Psoas muscle (tissue), 8 donors: ENCODE measurements at regions of chr16 and their contacts with region 1.

Region 1: DNA sequence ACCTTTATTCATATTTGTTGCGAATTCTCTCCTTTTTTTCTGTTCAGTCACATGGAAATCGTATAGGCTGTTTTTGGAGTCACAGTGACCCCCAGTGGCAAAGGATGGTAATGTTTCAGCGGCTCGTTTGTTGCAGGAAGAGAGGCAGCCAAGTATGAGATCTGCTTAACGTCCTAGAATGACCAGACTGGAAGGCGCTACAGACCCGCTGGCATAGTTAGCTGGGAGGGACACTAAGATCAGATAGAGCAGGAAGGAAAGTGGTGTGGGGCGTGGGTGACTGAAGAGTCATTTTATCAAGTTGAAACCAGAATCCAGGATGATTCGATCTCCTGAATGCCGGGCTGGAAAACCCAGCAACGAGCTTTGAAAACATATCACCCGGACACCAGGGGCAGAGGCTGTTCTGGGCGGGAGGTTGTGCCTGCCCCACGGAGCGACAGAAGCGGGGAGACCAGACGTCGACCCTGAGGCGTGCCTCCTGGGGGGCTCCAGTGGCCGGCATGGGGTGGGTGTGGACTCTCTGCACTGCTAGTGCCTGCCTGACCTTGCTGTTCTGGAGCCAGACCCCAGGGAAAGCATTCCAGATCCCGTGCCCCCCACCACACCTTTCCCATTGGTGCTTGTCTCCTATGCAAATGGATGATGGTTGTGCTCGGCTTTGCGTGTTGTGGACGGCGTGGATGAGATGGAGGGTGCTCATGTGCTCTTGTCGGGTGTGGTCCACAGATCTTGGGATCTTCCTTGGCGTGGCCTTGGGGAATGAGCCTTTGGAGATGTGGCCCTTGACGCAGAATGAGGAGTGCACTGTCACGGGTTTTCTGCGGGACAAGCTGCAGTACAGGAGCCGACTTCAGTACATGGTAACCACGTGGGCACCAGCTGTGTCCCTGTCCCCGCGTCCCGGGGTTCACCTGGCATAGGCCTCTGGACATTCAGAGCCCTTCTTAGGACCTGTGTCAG is 7.7 kb downstream of the IL34 start:
- DNase-seq: peak; percentile 76 to 82
- ATAC-seq: peak; percentile 75 to 88 (median 79)
- H3K4me3 ChIP-seq: peak overlapping the region; percentile 37
- H3K27ac ChIP-seq: no peak overlapping the region
- H3K4me1 ChIP-seq: peaks cover 6% of the 10 kb centered on the region
- H3K27me3 ChIP-seq: no peaks in the 10 kb centered on the region
- CTCF ChIP-seq: peak; percentile 92

Region 2: DNA sequence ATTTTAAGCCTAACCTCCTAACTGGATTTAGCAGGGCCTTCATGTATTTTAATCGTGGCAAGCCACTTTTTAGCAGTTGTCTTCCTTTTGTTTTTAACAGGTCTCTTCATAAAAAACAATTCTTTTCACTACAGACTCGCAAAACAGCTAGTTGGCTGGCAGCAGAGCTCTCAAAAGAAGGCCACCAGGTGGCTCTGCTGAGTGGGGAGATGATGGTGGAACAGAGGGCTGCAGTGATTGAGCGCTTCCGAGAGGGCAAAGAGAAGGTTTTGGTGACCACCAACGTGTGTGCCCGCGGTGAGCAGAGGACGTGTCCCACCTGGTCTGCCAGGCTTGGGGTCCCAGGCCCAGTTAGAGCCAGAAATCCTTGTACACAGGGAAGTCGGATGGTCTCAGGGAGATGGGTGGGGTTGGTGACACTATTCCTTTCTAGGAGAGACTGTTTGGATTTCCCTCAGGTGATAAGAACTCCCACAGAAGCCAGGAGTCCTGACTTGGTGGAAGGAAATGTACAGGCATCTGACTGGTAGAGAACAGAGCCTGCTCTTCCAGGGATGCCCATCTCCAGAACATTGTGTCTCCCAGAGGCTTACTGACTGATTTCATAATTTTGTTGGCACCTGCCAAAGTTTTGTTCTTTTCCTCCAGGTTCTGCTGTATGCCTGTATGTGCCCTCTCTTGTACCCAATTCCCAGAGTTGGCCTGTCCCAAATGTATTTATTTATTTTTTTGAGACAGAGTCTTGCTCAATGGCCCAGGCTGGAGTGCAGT is 322.3 kb before region 1 on chr16:
- intact Hi-C with region 1: loop called in 1 of 2 experiments (anchors 5 kb)
- DNase-seq: peak in 1 of 2 donors; percentile 60
- ATAC-seq: peak; percentile 78 to 91 (median 87)
- H3K4me3 ChIP-seq: no peak overlapping the region
- H3K27ac ChIP-seq: peak overlapping the region; percentile 16
- H3K4me1 ChIP-seq: no peaks in the 10 kb centered on the region
- H3K27me3 ChIP-seq: no peaks in the 10 kb centered on the region
- CTCF ChIP-seq: peak; percentile 57

Region 3: GRCh38 chr16:70375636-70376611 is 278.2 kb before region 1 on chr16:
- intact Hi-C with region 1: loop called (anchors 10 kb)
- DNase-seq: no peak
- ATAC-seq: peak in 3 of 4 donors; percentile 20 to 37 (median 29)
- H3K4me3 ChIP-seq: no peak overlapping the region
- H3K27ac ChIP-seq: peak overlapping the region; percentile 62
- H3K4me1 ChIP-seq: peaks cover 21% of the 10 kb centered on the region
- H3K27me3 ChIP-seq: no peaks in the 10 kb centered on the region
- CTCF ChIP-seq: no peak

Region 4: GRCh38 chr16:70529051-70529777 is 124.9 kb before region 1 on chr16:
- intact Hi-C with region 1: loop called (anchors 5 kb)
- DNase-seq: no peak
- ATAC-seq: peak in 2 of 4 donors; percentile 57 to 63
- H3K4me3 ChIP-seq: peak overlapping the region; percentile 29
- H3K27ac ChIP-seq: peak overlapping the region; percentile 36
- H3K4me1 ChIP-seq: peaks cover 47% of the 10 kb centered on the region
- H3K27me3 ChIP-seq: no peaks in the 10 kb centered on the region
- CTCF ChIP-seq: peak; percentile 47

Region 5: DNA sequence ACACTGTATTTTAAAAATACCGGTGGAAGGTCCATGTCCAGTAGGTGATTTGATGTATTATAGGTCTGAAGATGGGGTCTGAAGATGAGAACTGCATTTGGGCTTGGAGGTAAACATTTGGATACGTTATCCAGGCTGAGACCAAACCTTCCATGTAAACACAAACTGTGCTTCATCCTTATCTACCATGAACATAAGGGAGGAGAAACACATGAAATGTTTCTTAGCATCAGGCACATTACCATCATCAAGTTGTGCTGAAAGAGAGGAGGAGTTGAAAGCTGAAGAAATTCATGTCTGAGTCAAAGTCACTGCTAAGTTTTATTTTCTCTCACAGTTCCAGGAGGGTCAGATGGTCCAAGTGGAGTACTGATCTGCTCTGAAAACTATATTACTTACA is 119.1 kb before region 1 on chr16:
- intact Hi-C with region 1: loop called in 1 of 2 experiments (anchors 5 kb)
- DNase-seq: no peak
- ATAC-seq: no peak
- H3K4me3 ChIP-seq: no peak overlapping the region
- H3K27ac ChIP-seq: no peak overlapping the region
- H3K4me1 ChIP-seq: no peaks in the 10 kb centered on the region
- H3K27me3 ChIP-seq: no peaks in the 10 kb centered on the region
- CTCF ChIP-seq: no peak